Left cardiac atrium (tissue), 4 donors: ENCODE measurements at regions of chr12 and their contacts with region 1.

Region 1: DNA sequence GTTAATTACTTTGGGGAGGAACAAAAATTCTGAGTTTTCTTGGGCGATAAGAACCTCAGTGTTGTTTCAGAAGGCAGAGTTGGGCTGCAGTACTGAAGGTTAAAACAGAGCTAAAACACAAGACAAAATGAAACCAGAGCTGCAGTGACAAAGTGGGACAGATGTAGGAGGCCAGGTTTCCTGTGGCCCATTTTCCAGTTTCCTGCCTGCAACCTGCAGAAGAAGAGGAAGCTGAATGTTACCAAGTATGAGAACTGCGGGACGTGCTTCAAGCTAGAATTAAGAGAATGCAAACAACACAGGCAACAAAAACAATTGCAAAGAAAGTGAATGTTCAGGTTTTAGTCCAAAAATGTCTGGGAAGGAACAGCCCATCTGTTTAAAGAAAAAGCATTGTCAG is 17.8 kb downstream of the ELK3 start:
- DNase-seq: no peak
- ATAC-seq: no peak

Region 2: GRCh38 chr12:96061864-96062453 is 150.0 kb before region 1 on chr12:
- intact Hi-C with region 1: loop called (anchors 1 to 5 kb)
- DNase-seq: peak; percentile 81
- ATAC-seq: peak; percentile 86 to 90

Region 3: GRCh38 chr12:96164951-96165811 is 46.8 kb before region 1 on chr12:
- intact Hi-C with region 1: loop called in 1 of 2 experiments (anchors 5 kb)
- DNase-seq: peak; percentile 64
- ATAC-seq: peak; percentile 73 to 76

Region 4: GRCh38 chr12:96489103-96490056 is 277.4 kb after region 1 on chr12 and contains the start of gene CFAP54:
- intact Hi-C with region 1: loop called in 1 of 2 experiments (anchors 1 kb)
- DNase-seq: peak; percentile 97
- ATAC-seq: peak; percentile 99
- total RNA-seq, gene CFAP54: 0.38 to 0.97 TPM

Region 5: DNA sequence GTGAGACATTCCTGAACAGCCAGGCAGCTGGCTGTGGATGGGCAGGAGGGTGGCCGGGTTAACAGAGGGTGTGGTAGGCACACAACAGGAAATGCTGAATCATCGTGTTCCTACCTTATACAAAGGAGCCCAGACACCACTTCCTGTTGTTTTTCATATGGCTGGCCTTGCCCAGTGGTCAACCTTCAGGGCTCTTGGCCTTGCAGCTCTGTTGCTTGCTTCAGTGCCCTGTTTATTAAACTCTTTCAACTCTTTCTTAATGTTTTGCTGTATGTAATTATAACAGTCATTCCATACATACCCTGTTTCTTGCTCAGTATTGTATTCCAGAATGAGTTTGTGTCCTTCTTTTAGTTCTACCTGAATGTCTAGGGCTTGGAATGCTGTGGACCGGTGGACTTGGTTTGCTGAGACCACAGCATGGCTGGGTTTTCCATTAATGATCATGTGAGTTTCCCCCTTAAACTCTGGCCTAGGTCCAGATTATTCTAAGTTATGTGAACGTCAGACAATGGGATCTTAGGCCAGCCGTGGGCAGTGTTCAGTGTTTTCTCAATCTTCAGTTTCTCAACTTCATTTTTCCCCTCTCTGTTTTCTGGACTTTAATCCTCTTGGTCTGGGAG is 289.3 kb after region 1 on chr12:
- intact Hi-C with region 1: loop called in 1 of 2 experiments (anchors 5 kb)
- DNase-seq: peak; percentile 58
- ATAC-seq: peak; percentile 83 to 95